ENCODE measurements at regions of chr1 and their contacts with region 1.

Region 1: GRCh38 chr1:66996018-66996682 is 57.8 kb downstream of the SLC35D1 start:
- DNase-seq: peak; percentile 70

Region 2: DNA sequence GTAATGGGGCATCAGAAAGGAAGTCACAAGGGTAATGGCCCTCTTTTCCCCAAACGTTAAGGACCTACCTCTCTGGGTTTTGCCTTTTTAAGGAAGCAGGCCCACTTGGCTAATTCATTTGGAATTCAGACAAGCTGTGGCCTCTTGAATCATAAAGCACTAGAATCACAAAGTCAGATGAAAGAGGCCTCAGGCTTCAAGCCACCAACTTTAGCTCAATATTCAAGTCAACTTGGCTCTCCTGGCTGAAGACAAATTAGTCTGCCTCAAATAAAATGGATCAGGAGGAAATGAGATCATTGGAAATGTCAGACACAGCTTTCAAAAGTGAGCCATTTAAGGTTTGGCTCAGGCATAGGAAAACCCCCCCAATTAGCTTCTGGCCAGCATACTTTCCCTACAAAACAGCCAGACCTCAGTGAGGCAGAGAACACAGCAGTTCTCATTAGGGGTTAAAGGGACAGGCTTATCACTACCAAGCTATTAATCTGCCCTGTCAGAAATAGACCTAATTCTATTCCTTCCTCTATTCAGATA is 23.5 kb after region 1 on chr1:
- CTCF ChIA-PET with region 1: no interaction called
- POLR2A ChIA-PET with region 1: no interaction called
- DNase-seq: no peak

Region 3: DNA sequence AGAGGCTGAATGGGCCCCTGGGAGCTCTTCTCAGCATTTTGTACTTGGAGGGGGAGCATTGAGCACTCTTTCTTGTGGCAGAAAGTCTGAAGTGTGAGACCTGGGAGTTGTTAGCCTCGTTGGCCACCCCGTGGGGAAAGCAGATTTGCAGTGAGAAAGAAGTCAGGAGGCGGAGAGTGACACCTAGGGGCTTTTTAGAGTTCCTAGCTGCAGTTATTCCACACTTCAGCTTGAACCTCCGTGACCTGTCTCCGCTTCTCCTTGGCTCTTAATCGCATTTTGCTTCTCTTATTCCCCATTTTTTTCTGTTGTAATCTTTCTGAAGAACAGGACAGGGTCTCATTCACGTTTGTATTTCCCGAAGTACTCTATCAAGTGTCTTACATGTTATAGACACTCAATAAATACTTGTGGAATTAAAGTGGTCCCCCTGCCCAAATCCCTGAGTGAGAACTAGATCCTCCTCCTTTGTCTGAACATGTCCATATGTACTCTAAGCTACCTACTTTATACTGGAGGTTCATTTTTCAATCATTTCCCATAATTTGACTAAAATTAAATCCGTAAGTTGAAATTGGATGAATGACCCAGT is 153.1 kb after region 1 on chr1:
- CTCF ChIA-PET with region 1: interaction called, 22 read pairs
- POLR2A ChIA-PET with region 1: no interaction called
- DNase-seq: peak; percentile 88